BJ (cell line): ENCODE measurements at regions of chr9 and their contacts with region 1.

Region 1: DNA sequence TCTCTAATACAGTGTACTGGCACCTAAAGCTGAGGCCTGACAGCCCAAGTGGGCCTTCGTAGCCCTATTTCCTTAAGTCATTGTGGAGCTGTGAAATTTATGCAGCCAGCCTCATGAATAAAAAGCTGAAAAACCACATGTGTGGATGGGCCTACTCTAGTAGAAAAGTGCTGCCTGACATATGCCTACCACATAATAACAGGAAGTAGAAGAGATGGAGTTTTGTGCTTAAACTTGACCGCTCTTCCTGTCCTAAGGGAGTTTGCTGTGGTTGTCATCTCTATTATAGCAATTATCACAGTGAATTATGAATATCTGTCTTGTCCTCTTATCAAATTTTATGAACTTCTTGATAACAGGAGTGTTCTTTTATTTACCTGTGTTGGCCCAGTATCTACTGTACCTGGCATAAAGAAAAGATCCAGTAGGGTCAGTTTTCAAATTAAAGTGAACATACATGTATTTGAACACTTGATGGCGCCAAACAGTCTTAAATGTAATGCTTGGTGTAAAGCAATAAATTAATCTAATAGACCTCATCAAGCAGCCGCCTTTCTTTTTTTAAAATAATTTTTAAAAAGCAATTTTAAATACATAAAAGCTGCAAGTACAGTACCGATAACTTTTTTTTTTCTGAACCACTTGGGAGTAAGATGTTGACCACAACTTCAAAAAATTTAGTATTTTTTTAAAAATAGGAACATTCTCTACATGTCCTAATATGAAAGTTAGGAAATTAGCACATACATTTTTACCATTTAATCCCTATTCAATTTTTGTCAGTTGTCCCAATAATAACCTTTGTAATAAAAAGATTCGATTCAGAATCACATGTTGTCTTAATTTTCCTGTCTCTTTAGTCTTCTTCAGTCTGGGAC is 51.0 kb downstream of the FKTN start:
- DNase-seq: no peak
- H3K4me3 ChIP-seq: no peak overlapping the region
- H3K27me3 ChIP-seq: no peaks in the 10 kb centered on the region
- CTCF ChIP-seq: peak; percentile 46

Region 2: DNA sequence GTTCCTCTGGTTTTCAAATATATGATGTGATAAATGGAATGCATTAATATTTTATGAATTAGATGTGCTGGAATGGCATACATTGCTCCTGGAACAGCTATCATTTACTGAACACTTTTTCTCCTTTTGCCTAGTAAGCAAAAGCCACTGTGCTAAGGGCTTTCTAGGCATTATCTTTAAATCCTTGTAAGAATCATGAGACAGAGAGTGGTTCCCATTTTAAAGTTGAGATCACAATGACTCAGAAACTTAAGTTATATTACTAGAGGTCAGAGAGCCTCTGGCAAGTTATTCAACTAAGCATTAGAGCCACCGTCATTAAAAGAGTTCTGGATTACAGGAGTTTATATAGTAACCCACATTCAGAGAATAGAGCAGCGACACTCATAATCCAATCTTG is 187.8 kb before region 1 on chr9:
- CTCF ChIA-PET with region 1: no interaction called
- POLR2A ChIA-PET with region 1: no interaction called
- DNase-seq: no peak
- H3K4me3 ChIP-seq: no peak overlapping the region
- H3K27me3 ChIP-seq: no peaks in the 10 kb centered on the region
- CTCF ChIP-seq: no peak

Region 3: DNA sequence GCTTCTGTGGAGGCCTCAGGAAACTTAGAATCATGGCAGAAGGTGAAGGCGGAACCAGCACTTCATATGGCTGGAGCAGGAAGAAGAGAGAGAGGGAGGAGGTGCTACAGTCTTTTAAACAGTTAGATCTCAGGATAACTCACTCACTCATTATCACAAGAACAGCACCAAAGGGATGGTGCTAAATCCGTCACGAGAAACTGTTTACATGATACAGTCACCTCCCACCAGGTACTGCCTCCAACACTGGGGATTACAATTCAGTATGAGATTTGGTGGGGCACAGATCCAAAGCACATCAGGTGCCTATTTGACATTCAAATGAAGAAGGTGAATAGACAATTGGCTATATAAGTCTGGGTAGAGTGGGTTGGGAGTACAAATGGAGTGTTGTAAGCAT is 15.8 kb before region 1 on chr9:
- CTCF ChIA-PET with region 1: interaction called, 13 read pairs
- POLR2A ChIA-PET with region 1: no interaction called
- DNase-seq: no peak
- H3K4me3 ChIP-seq: no peak overlapping the region
- H3K27me3 ChIP-seq: no peaks in the 10 kb centered on the region
- CTCF ChIP-seq: no peak

Region 4: GRCh38 chr9:105656131-105656921 is 47.4 kb after region 1 on chr9:
- CTCF ChIA-PET with region 1: no interaction called
- POLR2A ChIA-PET with region 1: no interaction called
- DNase-seq: no peak
- H3K4me3 ChIP-seq: peak overlapping the region; percentile 42
- H3K27me3 ChIP-seq: peaks cover 6% of the 10 kb centered on the region; the same call in 1 of the 2 replicates
- CTCF ChIP-seq: peak; percentile 13; the same call in 1 of the 2 replicates

Region 5: DNA sequence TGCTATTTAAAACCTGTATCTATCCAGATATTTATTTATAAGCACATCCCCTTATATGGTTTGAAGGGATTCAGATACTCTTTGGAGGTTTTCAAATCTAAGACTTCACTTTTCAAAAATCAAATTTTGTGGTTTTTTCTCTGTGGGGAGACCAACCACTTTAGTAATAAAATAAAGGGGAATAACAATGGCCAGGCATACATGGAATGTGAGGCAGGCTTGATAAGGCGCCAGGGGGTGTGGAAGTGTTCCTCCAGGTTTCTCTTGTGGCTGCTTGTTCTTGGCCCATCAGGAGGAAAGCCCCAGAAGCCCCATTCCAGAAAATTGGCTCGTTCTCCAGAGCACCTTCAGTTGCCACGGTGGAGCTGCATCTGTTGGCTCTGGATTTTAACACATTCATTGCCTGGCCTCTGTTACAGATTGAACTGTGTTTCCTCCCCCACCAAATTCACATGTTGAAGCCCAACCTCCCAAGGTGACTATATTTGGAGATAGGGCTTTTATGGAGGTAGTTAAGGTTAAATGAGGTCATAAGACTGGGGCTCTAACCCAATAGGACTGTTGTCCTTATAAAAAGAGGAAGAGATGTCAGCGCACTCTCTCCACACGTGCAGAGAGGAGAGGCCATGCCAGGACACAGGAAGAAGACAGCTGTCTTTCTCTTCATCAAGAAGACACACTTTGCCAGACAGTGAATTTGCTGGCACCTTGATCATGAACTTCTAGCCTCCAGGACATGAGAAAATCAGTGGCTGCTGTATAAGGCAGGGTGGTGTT is 281.3 kb after region 1 on chr9:
- CTCF ChIA-PET with region 1: no interaction called
- POLR2A ChIA-PET with region 1: no interaction called
- DNase-seq: no peak
- H3K4me3 ChIP-seq: no peak overlapping the region
- H3K27me3 ChIP-seq: no peaks in the 10 kb centered on the region
- CTCF ChIP-seq: no peak